Activated T-helper 1 cell treated with anti-CD3 and anti-CD28 coated beads, Interleukin-12 subunit alpha, Interleukin-12 subunit beta, Interleukin-2, Interleukin-4 antibody, amounts not matched to agents 30 ng/mL and 10 ng/mL and 1 ng/mL, durations not matched to agents 14 hours and 24 hours and 36 hours (primary cell): ENCODE measurements at regions of chr12 and their contacts with region 1.

Region 1: DNA sequence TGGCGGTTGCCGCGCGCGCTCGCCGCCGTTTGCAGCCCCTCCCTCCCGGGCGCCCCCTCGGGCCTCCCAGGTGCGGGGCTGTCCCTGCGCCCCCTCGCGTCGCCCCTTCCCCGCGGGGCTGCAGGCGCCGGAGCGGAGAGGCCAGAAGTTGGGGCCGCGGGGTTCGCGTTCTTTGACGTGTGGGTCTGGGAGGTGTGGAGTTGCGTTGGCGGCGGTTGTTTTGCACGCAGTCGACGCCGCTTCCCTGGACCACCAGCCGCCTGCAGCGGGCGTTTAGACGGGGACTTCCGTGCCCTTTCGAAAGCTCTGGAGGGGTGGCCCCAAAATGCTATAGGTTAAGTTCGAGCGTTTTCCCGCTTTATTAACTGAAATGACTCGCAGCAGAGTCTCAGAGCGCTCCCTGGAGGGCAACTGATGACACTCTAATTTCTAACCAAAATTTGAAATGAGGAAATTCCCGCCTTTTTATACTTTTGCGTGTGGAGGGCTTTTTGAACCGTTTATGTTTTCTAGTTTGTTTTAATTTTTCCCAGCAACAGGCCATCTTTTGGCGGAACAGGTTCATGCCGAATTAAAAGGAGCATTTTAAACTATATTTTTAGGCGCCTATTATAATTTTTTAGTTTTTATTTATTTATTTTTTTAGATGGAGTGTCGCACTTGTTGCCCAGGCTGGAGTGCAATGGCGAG is 939 bp downstream of the TMPO start:
- DNase-seq: peak; percentile 83
- H3K4me3 Mint-ChIP-seq: peak overlapping the region; percentile 98
- H3K27ac Mint-ChIP-seq: peak overlapping the region; percentile 100
- H3K4me1 Mint-ChIP-seq: peaks cover 30% of the 10 kb centered on the region
- H3K27me3 Mint-ChIP-seq: no peaks in the 10 kb centered on the region

Region 2: GRCh38 chr12:98397316-98398105 is 118.8 kb before region 1 on chr12:
- intact Hi-C with region 1: loop called (anchors 1 kb)
- DNase-seq: peak; percentile 76
- H3K4me3 Mint-ChIP-seq: peak overlapping the region; percentile 77
- H3K27ac Mint-ChIP-seq: peak overlapping the region; percentile 53
- H3K4me1 Mint-ChIP-seq: peaks cover 38% of the 10 kb centered on the region
- H3K27me3 Mint-ChIP-seq: no peaks in the 10 kb centered on the region

Region 3: GRCh38 chr12:98490501-98491453 is 25.6 kb before region 1 on chr12:
- intact Hi-C with region 1: loop called (anchors 1 kb)
- DNase-seq: peak; percentile 72
- H3K4me3 Mint-ChIP-seq: peak overlapping the region; percentile 24
- H3K27ac Mint-ChIP-seq: peak overlapping the region; percentile 84
- H3K4me1 Mint-ChIP-seq: peaks cover 8% of the 10 kb centered on the region
- H3K27me3 Mint-ChIP-seq: peaks cover 10% of the 10 kb centered on the region

Region 4: GRCh38 chr12:98532681-98533304 is 16.5 kb after region 1 on chr12:
- intact Hi-C with region 1: loop called (anchors 2 kb)
- DNase-seq: no peak
- H3K4me3 Mint-ChIP-seq: no peak overlapping the region
- H3K27ac Mint-ChIP-seq: no peak overlapping the region
- H3K4me1 Mint-ChIP-seq: peaks cover 18% of the 10 kb centered on the region
- H3K27me3 Mint-ChIP-seq: no peaks in the 10 kb centered on the region

Region 5: GRCh38 chr12:98644711-98645402 is 128.5 kb after region 1 on chr12 and contains the starts of genes APAF1 and IKBIP:
- intact Hi-C with region 1: loop called (anchors 1 kb)
- DNase-seq: peak; percentile 96
- H3K4me3 Mint-ChIP-seq: peak within 1 kb of the TSS; percentile 92
- H3K27ac Mint-ChIP-seq: peak within 1 kb of the TSS; percentile 95
- H3K4me1 Mint-ChIP-seq: peaks cover 49% of the 10 kb centered on the region
- H3K27me3 Mint-ChIP-seq: no peaks in the 10 kb centered on the region
- total RNA-seq, gene APAF1: 21.2 and 23.9 TPM in 2 replicates
- total RNA-seq, gene IKBIP: 35.5 and 36.5 TPM in 2 replicates

Region 6: DNA sequence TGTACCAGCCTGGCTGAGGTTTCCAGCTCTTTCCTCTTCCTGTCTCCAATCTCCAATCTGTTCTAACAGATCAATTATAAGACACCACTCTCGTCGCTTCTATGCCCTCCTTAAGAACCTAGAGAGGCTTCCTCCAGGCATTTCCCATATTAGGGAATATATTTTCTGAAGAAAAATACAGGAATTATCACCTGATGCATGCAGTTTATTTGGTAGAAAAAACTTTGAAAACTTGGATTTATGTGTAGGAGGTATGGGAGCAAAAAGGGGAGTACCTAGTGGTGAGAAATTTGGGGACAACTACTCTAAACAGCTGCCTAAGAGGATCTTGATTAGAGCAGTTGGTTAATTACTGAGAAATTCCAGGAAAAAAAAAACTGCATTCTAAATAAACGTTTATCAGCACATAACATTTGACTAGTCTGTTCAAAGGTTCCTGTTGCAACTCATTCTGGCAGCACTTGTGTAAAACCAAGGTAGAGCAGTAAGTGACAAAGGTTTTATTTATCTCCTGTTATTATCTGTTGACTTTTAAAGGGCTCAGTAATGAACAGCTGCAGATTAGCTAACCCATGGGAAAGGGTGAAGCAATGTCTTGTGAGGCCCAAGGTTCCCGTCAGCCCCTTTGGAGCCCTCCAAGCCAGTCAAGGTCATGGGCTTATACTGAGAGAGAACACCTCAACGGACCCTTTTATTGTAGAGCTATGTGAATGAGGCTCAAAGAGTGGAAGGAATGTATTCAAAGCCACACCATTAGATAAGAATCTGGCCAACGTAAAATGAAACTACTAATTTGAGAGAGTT is 1920.9 kb after region 1 on chr12:
- intact Hi-C with region 1: no loop called
- DNase-seq: no peak
- H3K4me3 Mint-ChIP-seq: no peak overlapping the region
- H3K27ac Mint-ChIP-seq: no peak overlapping the region
- H3K4me1 Mint-ChIP-seq: no peaks in the 10 kb centered on the region
- H3K27me3 Mint-ChIP-seq: peaks cover 2% of the 10 kb centered on the region